ENCODE measurements at regions of chr19 and their contacts with region 1.

Region 1: GRCh38 chr19:17390665-17391370 is 3.2 kb downstream of the CCDC194 start:
- DNase-seq: peak; percentile 92
- H3K4me3 Mint-ChIP-seq: peak overlapping the region; percentile 81
- H3K27ac Mint-ChIP-seq: no peak overlapping the region
- H3K4me1 Mint-ChIP-seq: peaks cover 30% of the 10 kb centered on the region
- H3K27me3 Mint-ChIP-seq: peaks cover 55% of the 10 kb centered on the region

Region 2: GRCh38 chr19:17215125-17215971 is 175.5 kb before region 1 on chr19 and contains the start of gene USE1:
- CTCF ChIA-PET with region 1: no interaction called
- DNase-seq: peak; percentile 93
- H3K4me3 Mint-ChIP-seq: peak within 1 kb of the TSS; percentile 89
- H3K27ac Mint-ChIP-seq: peak within 1 kb of the TSS; percentile 99
- H3K4me1 Mint-ChIP-seq: peaks cover 25% of the 10 kb centered on the region
- H3K27me3 Mint-ChIP-seq: peaks cover 2% of the 10 kb centered on the region

Region 3: GRCh38 chr19:17292286-17293097 is 98.3 kb before region 1 on chr19:
- CTCF ChIA-PET with region 1: interaction called, 52 read pairs
- DNase-seq: peak; percentile 85
- H3K4me3 Mint-ChIP-seq: peak overlapping the region; percentile 87
- H3K27ac Mint-ChIP-seq: peak overlapping the region; percentile 87
- H3K4me1 Mint-ChIP-seq: peaks cover 12% of the 10 kb centered on the region
- H3K27me3 Mint-ChIP-seq: peaks cover 17% of the 10 kb centered on the region

Region 4: GRCh38 chr19:17346109-17346671 is 44.6 kb before region 1 on chr19:
- CTCF ChIA-PET with region 1: interaction called, 44 read pairs
- DNase-seq: peak; percentile 85
- H3K4me3 Mint-ChIP-seq: no peak overlapping the region
- H3K27ac Mint-ChIP-seq: no peak overlapping the region
- H3K4me1 Mint-ChIP-seq: peaks cover 19% of the 10 kb centered on the region
- H3K27me3 Mint-ChIP-seq: peaks cover 42% of the 10 kb centered on the region

Region 5: DNA sequence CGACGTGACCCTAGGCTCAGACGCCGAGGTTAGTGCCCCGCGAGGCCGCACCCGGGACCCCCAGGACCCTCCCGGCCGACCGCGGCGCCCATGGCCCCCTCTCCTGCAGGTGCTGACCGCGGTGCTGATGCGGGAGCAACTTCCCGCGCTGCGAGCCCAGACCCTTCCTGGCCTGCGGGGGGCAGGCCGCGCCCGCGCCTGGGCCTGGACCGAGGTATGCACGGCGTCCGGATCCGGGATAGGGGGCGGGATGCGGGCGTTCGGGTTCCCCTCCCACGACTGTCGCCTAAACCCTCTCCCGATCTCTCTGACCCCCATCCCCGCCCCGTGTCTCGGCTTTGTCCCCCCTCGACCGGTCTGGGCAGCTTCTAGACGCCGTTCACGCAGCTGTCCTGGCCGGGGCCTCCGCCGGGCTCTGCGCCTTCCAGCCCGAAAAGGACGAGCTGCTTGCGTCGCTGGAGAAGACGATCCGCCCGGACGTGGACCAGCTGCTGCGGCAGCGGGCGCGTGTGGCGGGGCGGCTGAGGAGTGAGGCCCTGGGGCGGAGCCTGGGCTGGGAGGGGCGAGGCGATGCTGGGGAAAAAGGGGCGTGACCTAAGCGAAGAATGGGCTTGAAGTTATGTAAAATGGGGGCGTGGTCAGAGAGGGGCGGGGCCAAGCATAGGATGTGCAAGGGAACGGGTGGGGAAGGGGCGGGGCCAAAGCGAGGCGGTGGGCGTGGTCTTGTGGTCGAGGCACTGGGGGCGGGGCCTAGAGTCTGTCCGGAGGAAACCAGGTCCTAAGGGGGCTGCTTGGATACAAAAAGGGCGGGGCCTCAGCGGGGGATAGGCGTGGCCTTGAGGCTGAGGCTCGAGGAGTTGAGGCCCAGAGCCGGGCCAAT is 148.7 kb after region 1 on chr19:
- CTCF ChIA-PET with region 1: no interaction called
- DNase-seq: peak; percentile 99
- H3K4me3 Mint-ChIP-seq: peak overlapping the region; percentile 74
- H3K27ac Mint-ChIP-seq: peak overlapping the region; percentile 55
- H3K4me1 Mint-ChIP-seq: peaks cover 18% of the 10 kb centered on the region
- H3K27me3 Mint-ChIP-seq: peaks cover 66% of the 10 kb centered on the region

Measured in activated naive CD4-positive, alpha-beta T cell treated with anti-CD3 and anti-CD28 coated beads, Interleukin-2, amount 10 ng/mL, durations not matched to agents 7 days and 5 days (primary cell).